ENCODE measurements at regions of chr17 and their contacts with region 1.

Region 1: DNA sequence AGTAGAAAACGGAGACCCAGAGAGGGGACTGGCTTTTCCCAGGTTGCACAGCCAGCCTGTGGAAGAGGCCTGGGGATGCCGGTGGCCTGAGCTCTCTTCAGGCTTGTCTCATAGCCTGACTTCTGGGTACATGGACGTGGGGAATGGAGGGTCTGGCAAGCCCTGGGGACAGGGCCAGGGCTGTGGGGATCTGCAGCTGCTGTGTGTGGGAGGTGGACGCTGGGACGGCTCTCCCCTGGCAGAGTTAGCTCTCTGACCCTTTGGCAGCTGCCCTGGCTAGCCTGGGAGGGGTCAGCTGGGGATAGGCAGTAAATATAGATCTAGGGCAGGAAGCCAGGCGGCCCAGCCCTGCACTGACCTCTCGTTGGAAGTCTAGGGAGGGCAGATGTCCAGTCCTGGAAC is 20.5 kb downstream of the SLC4A1 start:
- DNase-seq: no peak
- H3K27ac ChIP-seq: no peak overlapping the region
- CTCF ChIP-seq: no peak

Region 2: DNA sequence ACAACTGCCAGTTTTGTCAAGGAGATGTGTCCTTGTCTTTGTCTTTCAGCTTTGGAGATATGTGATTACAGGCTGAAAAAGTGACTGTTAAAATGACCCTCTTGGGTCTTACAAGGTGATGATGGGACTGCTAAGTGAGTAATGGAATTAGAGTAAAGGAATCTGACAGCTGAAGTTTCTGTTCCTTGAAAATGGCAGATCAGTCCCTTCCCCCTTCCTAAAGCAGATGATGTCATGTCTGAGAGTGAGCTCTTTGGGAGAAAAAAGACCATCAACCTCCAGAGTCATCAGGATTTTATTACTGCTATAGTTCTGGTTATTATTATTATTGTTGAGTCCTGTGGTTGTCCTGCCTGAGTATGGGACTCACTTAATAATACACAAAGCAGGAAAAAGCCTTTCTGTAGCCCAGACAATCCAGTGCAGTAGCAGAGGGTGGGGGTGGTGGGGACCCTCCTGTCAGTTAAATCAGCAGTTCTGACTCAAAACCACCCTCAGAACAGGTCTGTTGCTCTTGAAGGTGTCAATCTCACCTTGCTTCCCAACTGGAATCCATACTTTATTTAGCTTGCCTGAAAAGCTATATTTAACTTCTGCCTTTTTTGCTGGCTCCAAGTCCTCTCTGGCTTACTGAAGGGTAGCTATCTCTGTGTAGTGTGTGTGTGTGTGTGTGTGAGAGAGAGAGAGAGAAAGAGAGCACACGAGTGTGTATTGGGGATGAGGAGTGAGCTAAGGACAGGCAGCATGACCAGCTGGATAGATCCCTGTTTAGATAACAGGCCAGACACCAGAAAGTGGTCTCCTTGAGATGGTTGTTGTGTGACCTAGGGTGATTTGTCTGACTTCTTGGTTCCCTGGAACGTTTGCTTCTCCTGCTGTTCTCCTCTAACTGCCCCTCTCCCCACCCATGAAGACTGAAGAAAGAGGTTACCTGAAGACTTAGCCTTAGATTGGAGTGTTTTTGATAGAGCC is 100.8 kb before region 1 on chr17:
- CTCF ChIA-PET with region 1: no interaction called
- POLR2A ChIA-PET with region 1: no interaction called
- DNase-seq: no peak
- H3K27ac ChIP-seq: no peak overlapping the region
- CTCF ChIP-seq: no peak

Region 3: GRCh38 chr17:44176671-44177501 is 70.6 kb before region 1 on chr17:
- CTCF ChIA-PET with region 1: no interaction called
- POLR2A ChIA-PET with region 1: no interaction called
- DNase-seq: no peak
- H3K27ac ChIP-seq: peak overlapping the region; percentile 26
- CTCF ChIP-seq: no peak

Region 4: DNA sequence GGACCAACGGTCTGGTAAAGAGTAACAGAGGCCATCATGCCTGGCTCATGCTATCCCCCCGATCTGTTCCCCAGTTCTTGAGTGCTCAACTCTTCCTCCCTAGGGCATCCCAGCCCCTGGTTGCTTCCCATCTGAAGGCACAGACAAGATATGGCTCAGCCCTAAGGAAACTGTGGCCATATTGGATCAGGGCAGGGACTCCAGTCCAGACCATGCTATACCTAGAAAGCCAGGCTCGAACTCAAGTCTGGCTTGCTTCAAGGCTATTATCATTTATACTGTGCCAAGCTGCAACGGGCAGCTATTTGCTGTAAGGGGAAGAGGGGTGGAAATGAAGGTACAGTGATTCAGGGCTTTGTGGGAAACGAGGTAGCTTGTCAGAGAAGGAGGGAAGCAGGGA is 30.7 kb before region 1 on chr17:
- CTCF ChIA-PET with region 1: interaction called, 10 read pairs
- POLR2A ChIA-PET with region 1: no interaction called
- DNase-seq: no peak
- H3K27ac ChIP-seq: peak overlapping the region; percentile 14; the same call in 1 of the 2 replicates
- CTCF ChIP-seq: no peak

Region 5: DNA sequence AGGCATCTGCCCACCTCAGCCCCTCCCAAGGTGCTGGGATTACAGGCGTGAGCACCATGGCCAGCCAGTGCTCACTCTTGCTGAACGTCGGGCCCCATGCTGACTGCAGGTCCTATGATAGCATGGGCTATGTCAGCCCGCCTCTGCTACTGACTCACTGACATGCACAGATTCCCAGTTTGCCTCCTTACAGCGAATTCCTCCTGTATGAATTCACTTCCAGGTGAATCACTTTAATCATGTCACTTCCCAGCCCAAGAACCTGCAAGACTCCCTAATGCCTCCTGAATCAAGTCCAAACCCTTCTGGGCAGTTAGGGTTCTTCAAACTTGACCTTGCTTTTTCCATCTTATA is 11.9 kb before region 1 on chr17:
- CTCF ChIA-PET with region 1: interaction called, 10 read pairs
- POLR2A ChIA-PET with region 1: no interaction called
- DNase-seq: peak; percentile 85
- H3K27ac ChIP-seq: peak overlapping the region; percentile 72
- CTCF ChIP-seq: no peak

Region 6: GRCh38 chr17:44314869-44315661 is 67.6 kb after region 1 on chr17:
- CTCF ChIA-PET with region 1: no interaction called
- POLR2A ChIA-PET with region 1: no interaction called
- DNase-seq: peak; percentile 56
- H3K27ac ChIP-seq: no peak overlapping the region
- CTCF ChIP-seq: no peak

Region 7: GRCh38 chr17:44400226-44400847 is 152.9 kb after region 1 on chr17:
- CTCF ChIA-PET with region 1: no interaction called
- POLR2A ChIA-PET with region 1: no interaction called
- DNase-seq: peak; percentile 20
- H3K27ac ChIP-seq: no peak overlapping the region
- CTCF ChIP-seq: peak; percentile 59

Measured in RWPE1 (cell line).